A673 (cell line): ENCODE measurements at regions of chr5 and their contacts with region 1.

Region 1: GRCh38 chr5:37370864-37371726 is at the start of gene NUP155:
- DNase-seq: peak; percentile 98
- H3K4me3 ChIP-seq: peak within 1 kb of the TSS; percentile 100
- H3K27ac ChIP-seq: peak within 1 kb of the TSS; percentile 89
- H3K4me1 ChIP-seq: peaks cover 5% of the 10 kb centered on the region
- H3K27me3 ChIP-seq: no peaks in the 10 kb centered on the region
- CTCF ChIP-seq: no peak
- total RNA-seq, gene NUP155: 91.9 and 94.4 TPM in 2 replicates

Region 2: GRCh38 chr5:37222176-37222575 is 148.9 kb before region 1 on chr5:
- CTCF ChIA-PET with region 1: no interaction called
- POLR2A ChIA-PET with region 1: interaction called, 14 read pairs
- intact Hi-C with region 1: no loop called
- DNase-seq: no peak
- H3K4me3 ChIP-seq: no peak overlapping the region
- H3K27ac ChIP-seq: no peak overlapping the region
- H3K4me1 ChIP-seq: no peaks in the 10 kb centered on the region
- H3K27me3 ChIP-seq: no peaks in the 10 kb centered on the region
- CTCF ChIP-seq: no peak

Region 3: DNA sequence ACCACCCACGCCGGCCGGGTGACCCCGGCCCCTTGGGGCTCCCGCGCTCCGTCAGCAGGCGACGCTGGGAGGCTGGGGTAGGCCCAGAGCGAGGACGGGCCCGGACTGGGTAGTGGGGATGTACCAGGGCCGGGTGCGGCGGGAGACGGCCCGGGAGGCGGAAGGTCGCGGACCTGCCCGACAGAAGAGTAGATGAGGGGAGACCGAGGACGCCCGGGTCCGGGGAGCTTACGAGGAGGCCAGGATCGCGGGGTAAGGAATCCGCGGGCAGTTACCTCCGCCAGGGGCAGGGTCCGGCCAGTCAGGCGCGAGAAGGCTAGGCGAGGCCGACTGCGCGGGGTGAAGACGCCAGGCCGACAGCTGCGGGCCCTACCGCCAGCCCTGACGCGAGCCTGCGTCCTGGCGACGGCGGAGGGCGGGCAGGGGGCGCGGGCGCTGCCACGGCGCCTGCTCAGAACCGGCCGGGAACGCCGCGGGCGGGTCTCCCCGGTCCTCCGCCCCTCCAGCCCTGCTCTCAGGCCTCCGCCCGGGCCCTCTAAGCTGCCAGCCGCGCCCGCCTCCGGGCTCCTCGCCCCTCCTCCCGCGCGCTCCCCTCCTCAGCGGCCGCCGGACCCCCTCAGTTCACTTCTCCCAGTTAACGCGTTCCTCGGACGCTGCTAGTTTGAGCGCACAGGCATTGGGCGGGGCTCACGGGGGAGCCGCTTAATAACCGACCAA is 122.0 kb before region 1 on chr5 and contains the start of gene CPLANE1:
- CTCF ChIA-PET with region 1: no interaction called
- POLR2A ChIA-PET with region 1: interaction called, 22 read pairs
- intact Hi-C with region 1: no loop called
- DNase-seq: peak; percentile 78
- H3K4me3 ChIP-seq: peak within 1 kb of the TSS; percentile 94
- H3K27ac ChIP-seq: peak within 1 kb of the TSS; percentile 89
- H3K4me1 ChIP-seq: no peaks in the 10 kb centered on the region
- H3K27me3 ChIP-seq: no peaks in the 10 kb centered on the region
- CTCF ChIP-seq: no peak
- total RNA-seq, gene CPLANE1: 21.9 and 29.9 TPM in 2 replicates

Region 4: DNA sequence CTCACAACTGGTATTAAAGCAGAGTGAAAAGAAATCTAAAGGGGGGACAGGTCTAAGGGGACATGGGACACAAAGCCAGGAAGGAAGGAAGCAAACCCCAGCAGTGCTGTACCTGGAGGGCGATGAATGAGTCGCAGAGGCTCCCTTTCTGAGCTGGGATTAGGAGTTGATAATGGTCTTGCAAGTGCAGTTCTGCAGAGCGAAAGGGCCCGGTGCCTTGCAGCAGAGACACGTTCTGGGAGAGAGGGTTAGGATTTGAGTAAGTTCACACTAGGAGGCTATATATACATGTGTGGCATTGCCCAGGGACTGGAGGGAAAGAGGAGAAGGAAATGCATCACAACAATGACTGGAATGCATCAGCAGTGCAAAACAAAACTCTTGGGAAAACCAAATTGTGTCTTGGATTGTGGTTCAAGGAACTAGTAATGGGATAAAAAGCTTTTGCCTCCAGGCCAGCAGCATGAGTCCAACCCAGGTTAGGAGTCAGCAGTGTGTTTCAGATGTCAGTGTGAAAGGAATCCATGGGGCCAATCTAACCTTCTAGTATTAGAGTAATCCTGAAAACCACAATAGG is 1224.1 kb after region 1 on chr5:
- CTCF ChIA-PET with region 1: no interaction called
- POLR2A ChIA-PET with region 1: interaction called, 10 read pairs
- intact Hi-C with region 1: no loop called
- DNase-seq: peak; percentile 29
- H3K4me3 ChIP-seq: no peak overlapping the region
- H3K27ac ChIP-seq: no peak overlapping the region
- H3K4me1 ChIP-seq: no peaks in the 10 kb centered on the region
- H3K27me3 ChIP-seq: no peaks in the 10 kb centered on the region
- CTCF ChIP-seq: no peak